Activated naive CD4-positive, alpha-beta T cell treated with anti-CD3 and anti-CD28 coated beads for 36 hours (primary cell): ENCODE measurements at regions of chr1 and their contacts with region 1.

Region 1: DNA sequence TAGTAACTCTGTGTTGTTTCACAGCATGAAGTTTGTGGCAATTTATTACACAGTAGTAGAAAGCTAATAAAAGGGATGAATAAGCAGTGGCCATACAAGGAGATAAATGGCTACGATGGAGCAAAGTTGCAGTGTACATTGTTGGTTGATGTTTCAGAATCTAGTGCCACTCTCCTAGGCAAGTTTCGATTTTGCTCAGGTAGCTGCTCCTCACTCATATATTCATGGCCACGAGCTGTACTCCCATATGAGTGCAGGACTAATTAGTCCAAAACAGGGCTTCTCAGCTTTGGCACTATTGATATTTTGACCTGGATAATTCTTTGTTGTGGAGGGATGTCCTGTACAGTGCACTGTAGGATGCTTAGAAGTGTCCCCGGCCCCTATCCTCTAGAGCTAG is 30.0 kb upstream of the ATP1A1 start:
- DNase-seq: no peak
- H3K4me3 Mint-ChIP-seq: no peak overlapping the region
- H3K27ac Mint-ChIP-seq: no peak overlapping the region
- H3K4me1 Mint-ChIP-seq: peaks cover 56% of the 10 kb centered on the region
- H3K27me3 Mint-ChIP-seq: no peaks in the 10 kb centered on the region

Region 2: DNA sequence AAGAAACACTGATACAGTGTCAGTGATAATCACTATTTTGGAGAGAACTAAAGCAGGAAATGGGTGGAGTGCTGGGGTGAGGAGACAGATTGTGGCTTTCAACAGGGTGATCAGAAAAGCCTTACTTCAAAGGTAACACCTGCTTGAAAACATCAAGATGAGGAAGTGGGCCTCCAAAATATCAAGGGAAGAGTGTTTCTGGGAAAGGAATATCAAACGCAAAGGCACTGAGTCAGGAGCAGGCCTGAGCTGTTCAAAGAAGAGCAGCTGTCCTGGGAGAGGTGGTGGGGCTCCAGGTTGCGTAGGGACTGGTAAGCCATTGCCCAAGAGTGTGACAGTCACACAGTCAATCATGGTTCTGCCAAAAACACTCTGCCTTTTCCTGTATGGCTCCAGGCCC is 17.1 kb before region 1 on chr1:
- CTCF ChIA-PET with region 1: no interaction called
- intact Hi-C with region 1: loop called (anchors 2 kb)
- DNase-seq: peak; percentile 73
- H3K4me3 Mint-ChIP-seq: peak overlapping the region; percentile 19
- H3K27ac Mint-ChIP-seq: peak overlapping the region; percentile 95
- H3K4me1 Mint-ChIP-seq: peaks cover 79% of the 10 kb centered on the region
- H3K27me3 Mint-ChIP-seq: no peaks in the 10 kb centered on the region